H1 (cell line): ENCODE measurements at regions of chr11 and their contacts with region 1.

Region 1: GRCh38 chr11:69950120-69950519 is 128.0 kb upstream of the ANO1 start:
- DNase-seq: peak; percentile 60 to 95
- H3K4me3 ChIP-seq: no peak overlapping the region
- H3K27ac ChIP-seq: no peak overlapping the region
- H3K4me1 ChIP-seq: peaks cover 4 to 16% (median 9%) of the 10 kb centered on the region in 4 experiments; a peak in 6 of 7 replicates
- H3K27me3 ChIP-seq: no peaks in the 10 kb centered on the region; a peak in 1 of 7 replicates
- CTCF ChIP-seq: peak; percentile 95 to 100 (median 100)
- EP300 ChIP-seq: no peak
- POLR2A ChIP-seq: no peak
- RAD21 ChIP-seq: peak; percentile 96 to 98

Region 2: DNA sequence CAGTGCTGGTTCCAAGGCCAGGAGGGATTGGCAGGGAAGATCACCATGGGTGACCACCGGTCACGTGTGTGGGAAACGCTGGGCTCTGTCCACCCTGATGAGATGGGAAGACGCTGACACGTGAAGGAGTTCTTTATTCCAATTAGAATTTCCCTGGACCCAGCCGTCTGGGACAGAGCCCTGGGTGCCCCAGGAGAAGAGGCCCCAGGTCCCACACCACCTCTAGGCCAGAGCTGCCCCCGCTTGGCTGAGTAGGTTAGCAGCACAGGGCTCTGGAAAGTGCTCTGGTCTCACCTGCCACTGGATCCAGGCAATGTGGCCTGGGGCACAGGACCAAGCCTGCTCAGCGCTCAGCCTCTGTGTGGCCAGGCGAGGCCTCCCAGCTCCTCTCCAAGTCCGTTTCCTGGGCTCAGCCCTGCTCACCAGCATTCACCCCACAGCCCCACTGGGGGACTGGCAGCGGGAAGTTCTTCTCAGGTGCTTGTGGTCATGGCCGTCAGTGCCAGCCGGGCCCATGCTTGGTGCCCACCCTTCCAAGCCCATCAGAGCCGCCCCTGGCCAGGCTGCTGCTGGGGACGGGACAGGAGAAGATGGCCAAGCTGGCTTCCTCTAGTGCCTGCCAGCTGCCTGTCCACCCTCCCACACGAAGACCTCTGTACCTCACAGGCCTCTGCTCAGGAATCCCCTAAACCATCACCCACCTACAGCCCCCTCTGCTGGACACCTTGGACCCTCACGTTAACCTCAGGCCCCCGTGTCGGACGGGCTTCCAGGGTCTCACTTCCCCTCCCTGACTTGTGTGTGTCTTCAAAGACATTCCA is 68.5 kb before region 1 on chr11:
- CTCF ChIA-PET with region 1: no interaction called
- POLR2A ChIA-PET with region 1: no interaction called
- DNase-seq: peak in 1 of 2 experiments; percentile 73
- H3K4me3 ChIP-seq: no peak overlapping the region
- H3K27ac ChIP-seq: no peak overlapping the region
- H3K4me1 ChIP-seq: peaks cover 0 to 8% (median 0%) of the 10 kb centered on the region in 4 experiments; a peak in 4 of 7 replicates
- H3K27me3 ChIP-seq: no peaks in the 10 kb centered on the region; a peak in 2 of 7 replicates
- CTCF ChIP-seq: peak; percentile 61 to 72 (median 69)
- EP300 ChIP-seq: no peak
- POLR2A ChIP-seq: no peak
- RAD21 ChIP-seq: peak; percentile 50 to 69

Region 3: GRCh38 chr11:69984457-69985261 is 34.5 kb after region 1 on chr11:
- CTCF ChIA-PET with region 1: interaction called, 54 read pairs
- POLR2A ChIA-PET with region 1: no interaction called
- DNase-seq: peak in 1 of 2 experiments; percentile 63
- H3K4me3 ChIP-seq: peak overlapping the region; percentile 36 to 71 (median 40); a peak in 5 of 8 replicates
- H3K27ac ChIP-seq: no peak overlapping the region
- H3K4me1 ChIP-seq: peaks cover 9 to 25% (median 17%) of the 10 kb centered on the region in 4 experiments
- H3K27me3 ChIP-seq: peaks cover 12 to 51% (median 42%) of the 10 kb centered on the region in 4 experiments
- CTCF ChIP-seq: no peak
- EP300 ChIP-seq: no peak
- POLR2A ChIP-seq: no peak
- RAD21 ChIP-seq: no peak

Region 4: DNA sequence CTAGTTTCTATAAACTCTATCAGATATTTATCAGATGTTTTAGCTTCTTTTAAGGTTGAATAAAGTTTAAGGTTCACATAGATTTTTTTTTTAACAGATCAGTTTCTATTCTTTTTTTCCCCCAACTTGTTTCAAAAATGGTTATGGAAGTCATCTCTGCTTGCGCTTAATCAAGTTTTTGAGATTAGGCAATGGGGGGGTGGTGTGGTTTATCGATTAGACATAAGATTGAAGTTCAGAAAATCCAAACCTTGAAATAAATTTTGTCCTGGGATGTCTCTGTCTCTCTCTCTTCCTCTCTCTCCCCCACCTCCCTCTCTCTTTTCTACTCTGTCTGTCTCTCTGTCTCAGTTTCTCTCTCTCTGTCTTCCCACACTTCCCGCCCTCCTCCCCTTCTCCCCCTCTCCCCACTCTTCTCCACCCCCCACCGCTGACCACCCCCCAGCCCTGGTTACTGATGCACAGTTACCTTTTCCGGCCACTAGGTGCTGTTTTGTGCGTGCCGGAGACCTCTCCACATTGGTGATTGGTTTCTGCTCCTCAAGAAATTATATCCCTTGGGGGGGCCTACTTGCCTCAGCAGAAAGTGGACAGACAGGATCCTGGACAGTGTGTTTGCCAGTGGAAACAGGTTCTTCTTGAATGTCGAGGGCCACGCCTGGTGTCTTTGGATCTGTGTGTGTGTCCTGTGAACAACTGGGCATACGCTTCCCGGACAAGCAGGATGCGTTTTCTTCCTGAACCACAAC is 98.3 kb after region 1 on chr11:
- CTCF ChIA-PET with region 1: interaction called, 10 read pairs
- POLR2A ChIA-PET with region 1: no interaction called
- DNase-seq: peak in 1 of 2 experiments; percentile 69
- H3K4me3 ChIP-seq: no peak overlapping the region
- H3K27ac ChIP-seq: no peak overlapping the region
- H3K4me1 ChIP-seq: peaks cover 0 to 3% (median 0%) of the 10 kb centered on the region in 4 experiments; a peak in 1 of 7 replicates
- H3K27me3 ChIP-seq: no peaks in the 10 kb centered on the region
- CTCF ChIP-seq: peak; percentile 60 to 79 (median 68)
- EP300 ChIP-seq: no peak
- POLR2A ChIP-seq: no peak
- RAD21 ChIP-seq: peak; percentile 44 to 62

Region 5: DNA sequence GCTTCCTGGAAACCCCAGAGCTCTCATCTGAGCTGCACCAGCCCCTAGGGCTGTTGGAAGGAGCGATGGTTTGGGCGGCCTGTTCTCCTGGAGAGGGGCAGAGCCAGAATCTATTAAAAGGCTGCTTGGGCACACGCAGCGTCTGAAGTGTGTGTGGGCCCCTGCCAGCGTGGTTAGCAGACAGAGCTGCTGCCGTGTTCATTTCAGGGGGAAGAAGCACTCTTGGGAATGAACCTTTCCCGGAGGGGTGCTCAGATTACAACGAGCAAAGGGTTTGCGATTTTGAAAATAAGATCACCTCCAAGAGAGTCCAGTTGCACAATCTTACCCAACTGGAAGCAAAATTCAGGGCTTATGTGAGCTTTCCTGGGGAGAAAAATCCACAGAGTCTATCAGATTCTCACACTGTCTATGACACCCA is 140.9 kb after region 1 on chr11:
- CTCF ChIA-PET with region 1: interaction called, 17 read pairs
- POLR2A ChIA-PET with region 1: no interaction called
- DNase-seq: no peak
- H3K4me3 ChIP-seq: no peak overlapping the region
- H3K27ac ChIP-seq: no peak overlapping the region
- H3K4me1 ChIP-seq: peaks cover 0 to 6% (median 4%) of the 10 kb centered on the region in 4 experiments; a peak in 6 of 7 replicates
- H3K27me3 ChIP-seq: no peaks in the 10 kb centered on the region; a peak in 1 of 7 replicates
- CTCF ChIP-seq: no peak
- EP300 ChIP-seq: no peak
- POLR2A ChIP-seq: no peak
- RAD21 ChIP-seq: no peak

Region 6: DNA sequence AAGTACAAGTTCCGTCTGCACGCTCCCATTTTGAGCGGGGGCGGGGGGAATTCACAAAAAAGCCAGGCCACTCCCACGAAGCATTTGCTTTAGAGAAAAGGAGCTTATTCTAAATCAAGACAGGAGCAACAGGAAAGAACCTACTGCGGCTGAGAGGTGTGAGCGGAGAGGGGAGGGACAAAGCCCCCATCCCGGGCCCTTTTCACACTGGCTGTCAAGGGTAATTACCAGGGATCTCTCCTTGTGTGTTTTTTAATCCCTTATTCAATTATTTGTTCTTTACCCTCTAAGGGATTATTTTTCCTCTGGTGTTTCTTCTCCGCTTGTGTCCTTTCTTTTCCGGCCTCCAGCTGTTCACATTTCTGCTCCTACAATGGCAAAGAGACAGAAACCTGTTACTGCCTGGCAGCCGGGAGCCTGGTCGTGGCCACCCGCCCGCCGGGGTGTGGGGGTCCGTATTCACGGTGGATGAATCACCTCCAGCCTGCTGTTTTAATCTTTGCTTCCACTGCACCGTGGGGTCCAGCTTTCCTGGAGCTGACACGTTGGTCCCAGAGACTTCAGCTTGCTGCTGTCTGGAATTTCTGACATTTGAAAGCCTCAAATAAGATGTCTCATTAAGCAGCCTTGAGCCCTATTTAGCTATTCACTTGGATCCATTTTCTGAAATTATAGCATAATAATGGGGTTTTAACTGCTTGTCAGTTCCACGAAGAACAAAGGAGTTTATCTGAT is 191.5 kb after region 1 on chr11:
- CTCF ChIA-PET with region 1: interaction called, 23 read pairs
- POLR2A ChIA-PET with region 1: no interaction called
- DNase-seq: peak in 1 of 2 experiments; percentile 17
- H3K4me3 ChIP-seq: peak overlapping the region in 2 of 4 experiments; percentile 24 to 41; a peak in 5 of 8 replicates
- H3K27ac ChIP-seq: no peak overlapping the region
- H3K4me1 ChIP-seq: peaks cover 3 to 26% (median 15%) of the 10 kb centered on the region in 4 experiments
- H3K27me3 ChIP-seq: peaks cover 0 to 20% (median 8%) of the 10 kb centered on the region in 4 experiments; a peak in 5 of 7 replicates
- CTCF ChIP-seq: no peak
- EP300 ChIP-seq: no peak
- POLR2A ChIP-seq: no peak
- RAD21 ChIP-seq: no peak

Region 7: DNA sequence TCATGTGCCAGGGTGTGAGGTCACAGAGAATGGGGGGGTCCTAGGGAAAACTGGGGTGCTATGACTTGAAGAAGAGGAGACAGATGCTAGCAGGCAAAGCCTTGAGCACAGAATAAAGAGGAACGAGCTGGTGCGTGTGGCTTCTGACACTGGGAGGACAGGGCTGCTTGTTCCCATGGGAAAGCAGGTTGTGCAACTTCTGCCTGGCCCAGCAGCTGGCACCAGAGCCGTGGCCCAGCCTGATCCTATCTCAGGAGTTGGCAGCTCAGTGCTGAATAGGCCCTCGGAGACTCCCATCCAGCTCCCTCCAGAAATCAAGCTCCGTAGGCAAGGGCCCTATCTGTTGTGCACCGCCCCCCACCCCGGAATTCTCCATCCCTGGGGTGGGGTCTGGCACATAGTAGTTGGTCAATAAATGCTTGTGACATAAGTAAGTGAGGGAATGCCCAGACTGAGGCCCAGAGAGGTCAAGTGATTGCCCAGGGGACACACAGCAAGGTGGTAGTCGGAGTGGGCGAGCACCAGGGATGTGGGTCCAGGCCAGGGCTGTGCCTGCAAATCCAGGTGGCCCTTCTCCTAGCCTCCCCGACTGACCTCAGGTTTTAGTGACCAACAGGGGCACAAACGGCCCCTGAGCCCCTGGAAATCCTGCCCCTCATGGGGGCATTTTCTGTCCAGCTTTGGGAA is 233.5 kb after region 1 on chr11:
- CTCF ChIA-PET with region 1: interaction called, 51 read pairs
- POLR2A ChIA-PET with region 1: no interaction called
- DNase-seq: no peak
- H3K4me3 ChIP-seq: no peak overlapping the region
- H3K27ac ChIP-seq: no peak overlapping the region
- H3K4me1 ChIP-seq: no peaks in the 10 kb centered on the region
- H3K27me3 ChIP-seq: no peaks in the 10 kb centered on the region
- CTCF ChIP-seq: no peak
- EP300 ChIP-seq: no peak
- POLR2A ChIP-seq: no peak
- RAD21 ChIP-seq: no peak

Region 8: GRCh38 chr11:70270877-70271648 is 320.9 kb after region 1 on chr11:
- CTCF ChIA-PET with region 1: no interaction called
- POLR2A ChIA-PET with region 1: no interaction called
- DNase-seq: peak in 1 of 2 experiments; percentile 68
- H3K4me3 ChIP-seq: peak overlapping the region; percentile 86 to 94 (median 90)
- H3K27ac ChIP-seq: peak overlapping the region; percentile 69
- H3K4me1 ChIP-seq: peaks cover 0 to 6% (median under 1%) of the 10 kb centered on the region in 4 experiments; a peak in 4 of 7 replicates
- H3K27me3 ChIP-seq: no peaks in the 10 kb centered on the region
- CTCF ChIP-seq: no peak
- EP300 ChIP-seq: no peak
- POLR2A ChIP-seq: no peak
- RAD21 ChIP-seq: no peak